CD8-positive, alpha-beta T cell (primary cell): ENCODE measurements at regions of chr17 and their contacts with region 1.

Region 1: GRCh38 chr17:6843241-6843880 is 11.8 kb upstream of the TEKT1 start:
- DNase-seq: peak in 2 of 9 experiments; percentile 56 to 69
- ATAC-seq: no peak
- H3K4me3 ChIP-seq: no peak overlapping the region
- H3K4me3 Mint-ChIP-seq: no peak overlapping the region
- H3K27ac ChIP-seq: no peak overlapping the region
- H3K27ac Mint-ChIP-seq: no peak overlapping the region
- H3K4me1 ChIP-seq: no peaks in the 10 kb centered on the region
- H3K4me1 Mint-ChIP-seq: peaks cover 3% of the 10 kb centered on the region
- H3K27me3 ChIP-seq: peaks cover 0 to 3% of the 10 kb centered on the region in 2 experiments
- H3K27me3 Mint-ChIP-seq: peaks cover 26% of the 10 kb centered on the region
- CTCF ChIP-seq: peak; percentile 66

Region 2: GRCh38 chr17:6753006-6753445 is 90.3 kb before region 1 on chr17:
- CTCF ChIA-PET with region 1: no interaction called
- POLR2A ChIA-PET with region 1: no interaction called
- intact Hi-C with region 1: loop called in 1 of 2 experiments (anchors 5 kb)
- DNase-seq: peak in 8 of 9 experiments; percentile 42 to 86 (median 56)
- ATAC-seq: peak; percentile 46
- H3K4me3 ChIP-seq: no peak overlapping the region
- H3K4me3 Mint-ChIP-seq: peak overlapping the region; percentile 4
- H3K27ac ChIP-seq: peak overlapping the region in 1 of 2 experiments; percentile 66
- H3K27ac Mint-ChIP-seq: peak overlapping the region; percentile 62
- H3K4me1 ChIP-seq: peaks cover 51% of the 10 kb centered on the region
- H3K4me1 Mint-ChIP-seq: peaks cover 45% of the 10 kb centered on the region
- H3K27me3 ChIP-seq: no peaks in the 10 kb centered on the region
- H3K27me3 Mint-ChIP-seq: no peaks in the 10 kb centered on the region
- CTCF ChIP-seq: no peak

Region 3: GRCh38 chr17:6772016-6772415 is 71.3 kb before region 1 on chr17:
- CTCF ChIA-PET with region 1: no interaction called
- POLR2A ChIA-PET with region 1: no interaction called
- intact Hi-C with region 1: no loop called
- DNase-seq: no peak
- ATAC-seq: no peak
- H3K4me3 ChIP-seq: no peak overlapping the region
- H3K4me3 Mint-ChIP-seq: no peak overlapping the region
- H3K27ac ChIP-seq: no peak overlapping the region
- H3K27ac Mint-ChIP-seq: no peak overlapping the region
- H3K4me1 ChIP-seq: no peaks in the 10 kb centered on the region
- H3K4me1 Mint-ChIP-seq: peaks cover 6% of the 10 kb centered on the region
- H3K27me3 ChIP-seq: peaks cover 0 to 10% of the 10 kb centered on the region in 2 experiments
- H3K27me3 Mint-ChIP-seq: peaks cover 12% of the 10 kb centered on the region
- CTCF ChIP-seq: no peak

Region 4: DNA sequence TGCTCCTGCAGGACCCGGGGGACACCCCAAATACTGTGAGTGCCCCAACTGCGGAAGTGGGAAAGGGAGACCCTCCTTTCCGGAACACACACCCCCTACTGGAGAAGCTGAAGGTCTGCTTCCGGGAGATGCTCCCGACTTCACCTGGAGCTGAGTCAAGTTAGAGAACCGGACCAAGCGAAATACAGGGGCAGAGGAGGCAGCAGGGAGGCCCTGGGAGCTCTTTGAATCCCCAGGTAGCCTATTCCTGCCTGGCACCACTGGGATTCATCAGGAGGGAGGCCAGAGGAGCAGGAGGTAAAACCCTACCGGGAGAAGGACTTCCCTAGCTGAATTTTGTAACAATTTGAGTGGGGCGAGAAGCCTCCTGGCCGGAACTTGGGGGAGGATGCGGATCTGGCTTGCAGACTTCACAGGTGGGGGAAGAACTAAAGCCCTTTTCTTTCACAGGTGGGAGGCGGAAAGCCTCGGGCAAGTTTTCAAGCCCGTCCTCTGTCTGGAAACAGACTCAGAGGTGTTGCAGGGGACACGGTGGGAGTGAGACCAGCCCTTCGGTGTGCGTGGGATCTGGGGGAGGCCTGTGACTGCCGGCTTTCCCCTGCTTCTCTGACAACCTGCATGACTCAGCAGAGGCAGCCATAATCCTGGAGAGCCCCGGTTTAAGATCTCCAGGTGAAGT is 10.5 kb after region 1 on chr17:
- CTCF ChIA-PET with region 1: interaction called, 20 read pairs
- POLR2A ChIA-PET with region 1: no interaction called
- intact Hi-C with region 1: no loop called
- DNase-seq: peak in 5 of 9 experiments; percentile 13 to 54 (median 22)
- ATAC-seq: peak; percentile 31
- H3K4me3 ChIP-seq: peak overlapping the region in 1 of 2 experiments; percentile 45
- H3K4me3 Mint-ChIP-seq: peak overlapping the region; percentile 66
- H3K27ac ChIP-seq: peak overlapping the region; percentile 7 to 66
- H3K27ac Mint-ChIP-seq: peak overlapping the region; percentile 34
- H3K4me1 ChIP-seq: peaks cover 4% of the 10 kb centered on the region
- H3K4me1 Mint-ChIP-seq: peaks cover 11% of the 10 kb centered on the region
- H3K27me3 ChIP-seq: no peaks in the 10 kb centered on the region
- H3K27me3 Mint-ChIP-seq: peaks cover 11% of the 10 kb centered on the region
- CTCF ChIP-seq: no peak

Region 5: GRCh38 chr17:7021993-7022778 is 178.8 kb after region 1 on chr17:
- CTCF ChIA-PET with region 1: interaction called, 25 read pairs
- POLR2A ChIA-PET with region 1: no interaction called
- intact Hi-C with region 1: loop called (anchors 2 to 5 kb)
- DNase-seq: peak; percentile 58 to 88 (median 76)
- ATAC-seq: peak; percentile 61
- H3K4me3 ChIP-seq: peak overlapping the region; percentile 17 to 41
- H3K4me3 Mint-ChIP-seq: peak overlapping the region; percentile 74
- H3K27ac ChIP-seq: peak overlapping the region in 1 of 2 experiments; percentile 46
- H3K27ac Mint-ChIP-seq: peak overlapping the region; percentile 37
- H3K4me1 ChIP-seq: peaks cover 42% of the 10 kb centered on the region
- H3K4me1 Mint-ChIP-seq: peaks cover 46% of the 10 kb centered on the region
- H3K27me3 ChIP-seq: no peaks in the 10 kb centered on the region
- H3K27me3 Mint-ChIP-seq: peaks cover 3% of the 10 kb centered on the region
- CTCF ChIP-seq: peak; percentile 98